Activated CD4-positive, alpha-beta memory T cell treated with anti-CD3 and anti-CD28 coated beads, Interleukin-2, amount 10 ng/mL, durations not matched to agents 7 days and 5 days (primary cell): ENCODE measurements at regions of chr7 and their contacts with region 1.

Region 1: DNA sequence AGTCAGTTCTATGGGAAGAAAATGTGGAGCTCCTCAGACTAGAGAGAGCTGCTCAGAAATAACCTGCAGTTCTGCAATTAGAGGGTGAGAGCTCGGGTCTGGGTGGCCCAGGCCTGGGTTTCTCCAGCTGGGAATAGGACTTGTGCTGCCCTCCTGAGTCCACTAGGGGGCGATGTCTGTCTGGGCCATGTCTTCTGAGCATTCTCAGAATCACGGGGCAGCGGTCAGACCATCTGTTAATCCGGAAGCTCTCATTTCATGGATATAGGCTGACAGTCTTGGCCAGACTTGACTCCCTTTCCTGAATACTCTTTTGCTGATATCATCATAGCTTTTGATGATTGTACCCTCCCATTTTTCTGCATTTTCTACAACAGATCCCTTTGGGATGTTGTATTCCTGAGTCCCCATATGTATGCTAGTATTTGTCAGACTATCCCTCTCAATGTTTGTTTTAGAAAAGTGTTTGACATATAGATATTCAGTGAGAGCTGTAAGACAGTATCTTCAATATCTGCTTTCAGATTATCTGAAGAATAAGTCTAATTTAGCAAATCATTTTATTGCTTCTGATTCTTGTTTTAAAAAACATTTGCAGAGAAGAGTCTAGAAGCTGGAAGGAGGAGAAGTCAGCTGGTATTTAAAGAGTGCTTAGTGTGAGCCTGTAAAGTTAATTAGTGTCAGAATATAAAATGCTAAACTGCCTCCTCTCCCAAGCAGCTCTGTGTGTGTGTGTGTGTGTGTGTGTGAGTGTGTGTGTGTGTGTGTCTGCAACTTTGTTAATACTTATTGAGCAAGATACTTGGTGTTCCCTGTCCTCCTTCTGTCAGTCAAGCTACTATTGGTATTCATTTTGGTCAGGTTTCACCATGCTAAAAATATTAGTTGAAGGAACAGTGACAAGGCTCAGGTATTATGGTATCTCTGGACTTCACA is 38.0 kb downstream of the STARD3NL start:
- DNase-seq: peak; percentile 84
- H3K4me3 Mint-ChIP-seq: no peak overlapping the region
- H3K27ac Mint-ChIP-seq: no peak overlapping the region
- H3K4me1 Mint-ChIP-seq: peaks cover 49% of the 10 kb centered on the region
- H3K27me3 Mint-ChIP-seq: no peaks in the 10 kb centered on the region

Region 2: DNA sequence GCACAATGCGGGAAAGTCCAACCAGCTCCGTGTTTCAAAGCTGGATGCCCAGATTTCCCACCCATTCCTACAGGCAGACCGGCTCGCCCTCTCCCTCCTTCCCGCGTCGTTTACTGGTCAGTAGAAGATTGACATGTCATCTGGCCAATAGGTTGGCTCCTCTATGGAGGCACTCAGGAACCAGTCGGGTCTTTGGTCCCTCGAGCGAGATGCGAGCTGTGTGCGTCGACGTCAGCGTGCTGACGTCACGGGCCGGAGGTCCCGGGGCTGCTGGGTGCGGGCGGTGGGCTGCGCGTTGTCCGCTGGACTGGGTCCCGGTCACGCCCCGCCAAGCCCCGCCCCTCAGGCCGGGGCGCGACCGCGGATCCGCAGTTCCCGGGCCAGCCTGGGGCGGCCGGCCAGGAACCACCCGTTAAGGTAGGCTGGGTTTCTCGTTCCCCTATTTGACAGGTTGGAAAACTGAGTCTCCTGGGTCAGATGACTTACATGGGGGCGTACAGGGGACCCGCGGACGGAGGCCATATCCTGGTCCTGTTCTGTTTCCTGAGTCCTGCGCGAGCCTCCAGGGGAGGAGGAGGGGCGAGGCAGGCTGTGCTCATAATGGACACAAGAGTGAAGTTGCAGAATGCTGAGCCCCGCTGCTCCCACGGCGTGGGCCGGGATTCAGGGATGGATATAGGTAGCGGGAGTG is 37.9 kb before region 1 on chr7 and contains the start of gene STARD3NL:
- CTCF ChIA-PET with region 1: interaction called, 19 read pairs
- POLR2A ChIA-PET with region 1: interaction called, 4 read pairs
- DNase-seq: peak; percentile 90
- H3K4me3 Mint-ChIP-seq: peak within 1 kb of the TSS; percentile 95
- H3K27ac Mint-ChIP-seq: peak within 1 kb of the TSS; percentile 78
- H3K4me1 Mint-ChIP-seq: peaks cover 35% of the 10 kb centered on the region
- H3K27me3 Mint-ChIP-seq: peaks cover 8% of the 10 kb centered on the region
- total RNA-seq, gene STARD3NL: 24.4 to 28.9 TPM

Region 3: DNA sequence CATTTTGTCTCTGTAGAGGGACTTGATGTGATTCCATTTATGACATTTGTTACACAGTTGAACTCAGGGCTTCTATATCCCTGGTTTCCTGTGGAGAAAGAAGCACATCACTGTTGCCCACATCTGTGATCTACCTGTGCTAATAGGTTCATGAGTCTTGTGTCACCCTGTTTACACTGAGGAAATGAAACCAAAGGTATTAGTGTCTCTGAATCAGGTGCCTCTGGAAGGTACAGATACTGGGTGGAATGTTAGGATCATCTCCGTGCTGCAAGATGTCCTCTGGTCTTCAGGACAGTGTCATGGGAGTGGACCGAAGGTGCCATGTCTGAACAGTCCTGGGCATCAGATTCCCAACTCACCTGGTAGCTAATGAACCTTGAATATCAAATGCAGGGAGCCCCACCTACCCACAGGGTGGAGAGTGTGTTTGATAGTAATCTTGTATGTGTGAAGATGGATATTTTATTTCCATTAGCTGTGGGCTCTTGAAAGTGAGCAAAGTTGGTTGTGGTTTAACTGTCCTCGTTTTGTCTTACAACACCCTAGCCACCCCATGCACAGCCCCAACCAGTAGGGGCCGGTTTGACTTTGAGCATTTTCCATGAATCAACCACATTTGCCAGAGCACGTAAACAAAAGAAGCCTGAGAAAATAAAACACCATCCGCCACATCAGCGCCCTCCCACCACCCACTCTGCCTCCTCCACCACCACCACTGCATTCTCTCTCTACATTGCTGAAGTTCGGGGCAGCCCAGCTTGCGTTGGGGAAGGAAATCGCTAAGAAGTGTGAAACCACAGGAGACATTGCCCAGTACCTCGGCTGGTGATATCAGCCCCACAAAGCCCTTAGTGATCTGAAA is 16.7 kb after region 1 on chr7:
- CTCF ChIA-PET with region 1: interaction called, 43 read pairs
- POLR2A ChIA-PET with region 1: interaction called, 10 read pairs
- DNase-seq: peak; percentile 91
- H3K4me3 Mint-ChIP-seq: peak overlapping the region; percentile 50
- H3K27ac Mint-ChIP-seq: peak overlapping the region; percentile 94
- H3K4me1 Mint-ChIP-seq: peaks cover 75% of the 10 kb centered on the region
- H3K27me3 Mint-ChIP-seq: no peaks in the 10 kb centered on the region

Region 4: GRCh38 chr7:38335492-38336147 is 119.6 kb after region 1 on chr7:
- CTCF ChIA-PET with region 1: interaction called, 172 read pairs
- POLR2A ChIA-PET with region 1: interaction called, 17 read pairs
- DNase-seq: peak; percentile 85
- H3K4me3 Mint-ChIP-seq: peak overlapping the region; percentile 75
- H3K27ac Mint-ChIP-seq: peak overlapping the region; percentile 74
- H3K4me1 Mint-ChIP-seq: peaks cover 56% of the 10 kb centered on the region
- H3K27me3 Mint-ChIP-seq: no peaks in the 10 kb centered on the region

Region 5: DNA sequence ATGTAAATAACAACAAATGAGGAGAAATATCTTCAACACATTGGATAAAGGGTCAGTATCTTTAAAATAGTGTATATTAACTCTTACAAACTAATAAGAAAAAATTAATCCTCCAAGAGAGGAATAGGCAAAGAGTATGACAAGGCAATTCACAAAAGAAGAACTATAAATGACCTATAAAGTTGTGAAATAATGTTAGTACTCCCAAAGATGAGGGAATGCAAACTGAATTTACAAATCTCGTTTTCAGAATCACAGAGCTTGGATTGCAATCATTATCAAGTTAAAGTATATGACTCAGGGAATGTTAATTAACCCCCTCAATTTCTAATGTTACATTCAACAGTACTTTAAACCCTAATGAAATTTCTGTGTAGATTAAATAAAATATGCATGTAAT is 144.8 kb after region 1 on chr7:
- CTCF ChIA-PET with region 1: interaction called, 314 read pairs
- POLR2A ChIA-PET with region 1: interaction called, 4 read pairs
- DNase-seq: no peak
- H3K4me3 Mint-ChIP-seq: peak overlapping the region; percentile 97
- H3K27ac Mint-ChIP-seq: peak overlapping the region; percentile 96
- H3K4me1 Mint-ChIP-seq: peaks cover 47% of the 10 kb centered on the region
- H3K27me3 Mint-ChIP-seq: no peaks in the 10 kb centered on the region

Region 6: GRCh38 chr7:39360038-39360437 is 1144.0 kb after region 1 on chr7:
- CTCF ChIA-PET with region 1: no interaction called
- POLR2A ChIA-PET with region 1: no interaction called
- DNase-seq: no peak
- H3K4me3 Mint-ChIP-seq: no peak overlapping the region
- H3K27ac Mint-ChIP-seq: no peak overlapping the region
- H3K4me1 Mint-ChIP-seq: peaks cover 4% of the 10 kb centered on the region
- H3K27me3 Mint-ChIP-seq: peaks cover 12% of the 10 kb centered on the region